ENCODE measurements at regions of chr21 and their contacts with region 1.

Region 1: DNA sequence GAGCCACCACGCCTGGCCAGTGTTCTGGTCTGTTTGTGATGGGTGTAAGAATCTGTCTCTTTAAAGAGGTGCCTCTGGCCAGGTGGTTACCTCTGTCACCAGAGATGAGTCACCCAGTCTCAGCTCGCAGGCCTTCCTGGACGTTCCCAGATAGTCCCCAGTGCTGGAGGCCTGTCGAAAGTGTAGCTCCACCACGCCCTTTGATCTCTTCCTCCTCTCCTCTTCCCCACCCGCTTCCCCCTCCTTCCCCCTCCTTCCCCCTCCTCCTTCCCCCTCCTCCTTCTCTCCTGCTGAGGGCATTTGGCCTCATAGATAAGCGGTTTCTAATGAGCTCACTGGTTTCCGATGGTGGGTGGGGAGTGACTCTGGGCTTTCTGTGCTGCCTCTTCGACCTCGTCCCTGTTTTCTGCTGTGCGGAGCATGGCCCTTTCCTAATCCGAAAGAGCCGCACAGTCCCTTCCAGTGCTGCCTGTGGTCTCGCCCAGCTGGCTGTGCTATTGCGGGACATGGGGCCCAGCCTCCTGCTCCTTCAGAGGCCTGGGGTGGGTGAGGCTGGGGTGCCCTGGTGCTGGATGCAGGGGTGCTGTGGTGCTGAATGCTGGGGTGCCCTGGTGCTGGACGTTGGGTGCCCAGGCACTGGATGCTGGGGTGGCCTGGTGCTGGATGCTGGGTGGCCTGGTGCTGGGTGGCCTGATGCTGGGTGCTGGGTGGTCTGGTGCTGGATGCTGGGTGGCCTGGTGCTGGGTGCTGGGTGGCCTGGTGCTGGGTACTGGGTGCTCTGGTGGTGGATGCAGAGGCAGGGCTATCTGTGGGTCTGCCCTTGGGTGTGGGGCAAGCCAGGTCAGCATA is 19.2 kb downstream of the AGPAT3 start:
- DNase-seq: no peak
- ATAC-seq: peak; percentile 30

Region 2: DNA sequence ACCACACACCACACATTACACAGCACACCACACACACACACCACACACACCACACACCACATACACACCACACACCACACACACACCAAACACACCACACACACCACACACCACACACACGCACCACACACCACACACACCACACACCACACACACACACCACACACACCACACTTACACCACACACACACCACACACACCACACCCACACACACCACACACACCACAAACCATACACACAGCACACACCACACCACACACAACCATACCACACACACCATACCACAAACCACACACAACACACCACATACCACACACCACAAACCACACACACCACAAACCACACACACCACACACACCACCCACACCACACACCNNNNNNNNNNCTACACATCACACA is 416.5 kb before region 1 on chr21:
- intact Hi-C with region 1: no loop called
- DNase-seq: no peak
- ATAC-seq: no peak

Region 3: DNA sequence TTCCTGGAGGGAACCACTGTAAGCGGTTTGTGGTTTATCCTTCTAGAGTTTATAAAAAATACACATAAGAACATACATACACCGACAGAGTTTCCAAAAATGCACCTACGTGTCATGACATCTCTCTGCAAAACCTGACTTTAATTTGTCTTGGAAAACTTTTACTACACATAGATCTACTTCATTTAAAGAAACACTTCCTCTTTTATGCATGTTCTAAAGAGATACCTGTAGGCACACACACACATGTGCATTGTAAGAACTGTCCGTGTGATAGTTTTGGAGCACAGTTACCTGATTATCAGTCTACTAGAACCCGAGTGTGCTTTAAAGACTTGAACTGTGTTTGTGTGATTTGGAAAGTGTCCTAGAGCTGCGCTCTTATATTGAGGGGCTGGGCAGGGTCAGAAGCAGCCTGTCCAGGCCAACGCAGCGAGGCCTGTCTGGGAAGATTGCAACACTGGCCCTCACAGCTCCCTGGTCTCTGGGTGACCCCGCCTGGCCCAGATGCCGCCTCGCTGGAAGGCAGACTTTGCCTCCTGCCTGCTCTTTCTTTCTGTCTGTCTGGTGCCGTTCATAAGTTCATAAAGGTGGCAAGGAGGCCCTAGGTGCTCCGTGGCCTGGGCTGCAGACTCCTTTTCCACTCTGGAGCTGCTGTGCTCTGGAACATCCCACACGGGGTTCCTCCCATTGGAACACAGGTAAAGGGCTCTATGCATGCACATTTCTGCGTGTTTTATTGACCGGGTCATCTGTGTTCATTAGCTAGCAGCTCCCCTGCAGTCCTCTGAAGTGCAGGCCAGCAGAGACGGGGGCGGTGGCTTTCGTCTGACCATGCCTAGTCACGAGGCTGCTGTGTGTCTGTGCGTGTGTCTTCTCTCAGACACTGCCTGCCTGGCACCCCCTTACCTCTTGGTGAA is 27.0 kb after region 1 on chr21:
- intact Hi-C with region 1: loop called (anchors 2 kb)
- DNase-seq: no peak
- ATAC-seq: peak; percentile 69

Region 4: GRCh38 chr21:43938751-43939442 is 54.7 kb after region 1 on chr21:
- intact Hi-C with region 1: no loop called
- DNase-seq: peak; percentile 91
- ATAC-seq: peak; percentile 82